Cardiac septum (tissue), 1 donor: ENCODE measurements at regions of chr10 and their contacts with region 1.

Region 1: DNA sequence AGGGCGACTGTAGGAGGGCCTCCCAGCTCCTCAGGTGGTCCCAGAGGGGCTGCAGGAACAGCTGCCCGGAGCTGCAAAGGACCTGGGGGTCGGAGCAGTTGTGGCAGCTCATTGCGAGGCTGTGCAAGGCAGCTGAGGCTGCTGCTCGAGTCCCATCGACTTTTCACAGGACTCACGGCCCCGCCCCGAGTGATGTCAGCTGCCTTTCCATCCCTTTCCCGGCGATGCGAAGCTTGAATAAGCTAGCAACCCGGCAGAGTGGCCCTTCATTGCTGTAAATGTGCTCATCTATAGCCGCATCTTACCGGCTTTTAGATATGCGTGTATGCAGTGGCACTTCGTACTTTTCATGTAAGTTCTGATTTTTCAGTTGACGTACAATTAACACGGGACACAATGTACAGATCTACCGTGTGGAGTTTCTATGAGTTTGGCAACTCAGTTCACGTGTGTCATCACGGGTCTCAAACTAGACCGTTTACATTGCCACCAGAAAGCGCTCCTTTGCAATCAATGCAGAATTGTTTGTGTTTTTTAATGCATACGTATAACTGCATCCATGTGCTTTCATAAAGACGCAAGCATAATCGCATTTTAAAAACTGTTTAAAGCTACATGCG is at the start of gene CH25H:
- DNase-seq: peak; percentile 91
- total RNA-seq, gene CH25H: 1.00 TPM

Region 2: DNA sequence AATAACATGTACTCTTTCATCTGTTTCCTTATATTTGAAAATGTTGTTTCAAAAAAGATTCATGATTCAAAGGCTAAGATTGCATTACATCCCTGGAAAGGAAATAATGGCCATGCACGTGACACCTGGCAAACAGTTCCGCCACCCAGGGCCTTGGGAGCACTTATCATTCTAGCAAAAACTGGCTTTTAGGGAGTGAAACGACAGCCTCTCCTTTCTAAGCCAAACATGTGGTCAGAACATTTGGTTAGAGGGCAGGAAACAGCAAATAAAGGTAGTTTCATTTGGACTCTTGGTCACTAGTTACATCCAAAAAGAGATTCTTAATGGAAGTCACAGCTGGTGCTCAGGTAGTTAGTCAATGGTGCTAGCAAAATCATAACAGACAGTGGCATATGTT is 133.2 kb before region 1 on chr10:
- intact Hi-C with region 1: loop called (anchors 5 kb)
- DNase-seq: no peak

Region 3: DNA sequence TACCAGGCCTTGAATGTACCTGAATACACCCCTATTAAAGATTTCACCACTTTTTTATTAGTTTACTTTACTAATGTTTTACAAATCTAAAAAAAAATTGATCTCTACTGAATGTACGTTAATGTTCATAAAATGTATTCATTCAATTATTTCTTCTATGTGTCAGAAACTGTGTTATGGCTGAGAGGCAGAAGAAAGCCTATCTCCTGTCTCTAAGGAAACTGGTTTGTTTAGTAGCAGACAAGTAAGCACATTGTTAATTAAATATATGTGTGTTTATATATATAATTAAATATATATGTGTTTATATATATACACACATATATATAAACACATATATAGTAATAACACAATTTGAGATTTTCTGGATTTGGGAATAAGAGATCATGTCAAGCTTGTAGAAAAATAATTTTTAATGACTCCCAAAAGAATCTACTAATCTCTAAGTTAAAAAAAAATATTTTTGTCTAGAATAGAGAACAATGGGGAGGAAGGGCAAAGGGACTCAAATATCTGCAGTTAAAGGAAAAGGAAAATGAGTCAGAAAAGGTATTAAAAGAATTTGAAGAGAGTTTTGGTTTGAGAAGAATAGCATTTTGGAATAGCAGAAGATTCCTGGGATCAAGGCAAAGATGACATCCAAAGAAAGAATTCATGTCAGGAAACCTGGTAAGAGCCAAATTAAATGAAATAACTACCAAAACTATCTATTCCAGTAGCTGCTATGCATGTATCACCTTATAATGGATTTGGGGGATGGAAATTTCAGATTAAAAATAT is 92.3 kb before region 1 on chr10:
- intact Hi-C with region 1: loop called (anchors 5 kb)
- DNase-seq: no peak

Region 4: GRCh38 chr10:89147256-89147655 is 60.0 kb before region 1 on chr10:
- intact Hi-C with region 1: no loop called
- DNase-seq: no peak